Ascending aorta (tissue), 2 donors: ENCODE measurements at regions of chr1 and their contacts with region 1.

Region 1: DNA sequence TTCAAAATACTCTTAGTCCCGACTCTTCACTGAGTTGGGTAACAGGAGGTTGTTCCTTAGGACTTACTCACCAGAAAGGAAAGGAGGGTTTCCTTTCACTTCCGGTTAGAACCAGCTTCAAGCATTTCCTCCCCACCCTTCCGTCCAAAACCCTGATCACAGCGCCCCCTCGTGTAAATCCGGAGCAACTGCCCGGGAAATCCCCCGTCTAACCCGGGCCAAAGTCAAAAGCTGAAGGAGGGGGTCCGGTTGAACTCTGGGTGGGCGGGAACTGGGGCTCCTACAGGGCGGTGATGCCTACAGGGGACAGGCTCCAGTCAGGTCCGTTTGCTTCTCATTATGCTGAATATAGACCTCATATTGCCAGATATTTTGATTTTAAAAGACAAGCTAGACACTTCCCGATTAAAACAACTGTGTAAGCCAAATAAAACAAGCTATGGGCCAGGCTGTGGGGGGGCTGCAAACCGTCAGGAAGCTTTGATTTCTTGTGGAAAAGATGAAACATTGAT is 15.0 kb upstream of the MTARC2 start:
- DNase-seq: peak in 1 of 2 donors; percentile 88
- H3K4me3 ChIP-seq: peak overlapping the region; percentile 24 to 56
- H3K27ac ChIP-seq: peak overlapping the region; percentile 80 to 82
- H3K4me1 ChIP-seq: peaks cover 0 to 11% of the 10 kb centered on the region in 2 donors
- H3K27me3 ChIP-seq: no peaks in the 10 kb centered on the region
- CTCF ChIP-seq: peak; percentile 79 to 92 (median 90)

Region 2: GRCh38 chr1:220272047-220272840 is 460.9 kb before region 1 on chr1 and contains the start of gene RAB3GAP2:
- intact Hi-C with region 1: loop called (anchors 5 kb)
- DNase-seq: peak; percentile 80 to 97
- H3K4me3 ChIP-seq: peak within 1 kb of the TSS; percentile 79 to 89
- H3K27ac ChIP-seq: peak within 1 kb of the TSS; percentile 76 to 85
- H3K4me1 ChIP-seq: peaks cover 0 to 13% of the 10 kb centered on the region in 2 donors
- H3K27me3 ChIP-seq: no peaks in the 10 kb centered on the region
- CTCF ChIP-seq: no peak
- total RNA-seq, gene RAB3GAP2: 9.8 TPM

Region 3: DNA sequence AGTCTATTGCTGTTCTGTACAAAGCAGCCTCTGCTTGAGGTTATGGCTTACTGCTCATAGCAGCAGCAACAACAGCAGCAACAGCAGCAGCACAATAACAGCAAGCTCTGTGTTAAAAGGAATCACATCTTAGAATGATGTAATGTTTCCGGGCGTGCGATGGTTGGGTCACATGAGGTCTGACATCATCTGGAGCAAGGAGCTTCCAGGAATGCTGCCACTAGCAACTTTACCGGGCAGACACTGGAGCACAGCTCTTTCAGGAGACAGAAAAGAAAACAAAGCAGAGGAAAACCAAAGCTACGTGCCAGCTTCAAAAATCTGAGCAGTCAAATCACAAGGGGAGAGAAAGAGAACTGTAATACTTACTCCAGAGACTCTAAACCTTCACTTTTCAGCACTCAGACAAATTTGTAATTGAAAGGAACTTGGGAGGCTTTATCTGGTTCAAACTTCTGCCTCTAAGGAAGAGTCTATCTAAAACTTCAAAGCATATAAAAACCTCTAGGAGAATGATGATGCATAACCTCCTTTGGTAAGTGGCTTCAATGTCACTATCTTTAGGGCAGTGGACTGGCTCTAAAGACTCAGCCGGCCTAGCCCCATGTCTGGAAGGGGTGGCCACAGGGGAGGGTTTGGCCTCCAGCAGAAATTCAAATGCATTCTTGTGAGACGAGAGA is 432.6 kb before region 1 on chr1:
- intact Hi-C with region 1: loop called (anchors 2 kb)
- DNase-seq: peak; percentile 54 to 90
- H3K4me3 ChIP-seq: peak overlapping the region in 1 of 2 donors; percentile 42
- H3K27ac ChIP-seq: peak overlapping the region; percentile 79 to 81
- H3K4me1 ChIP-seq: peaks cover 0 to 2% of the 10 kb centered on the region in 2 donors
- H3K27me3 ChIP-seq: no peaks in the 10 kb centered on the region
- CTCF ChIP-seq: no peak

Region 4: GRCh38 chr1:220527908-220528678 is 205.1 kb before region 1 on chr1 and contains the start of gene MARK1:
- intact Hi-C with region 1: loop called (anchors 5 kb)
- DNase-seq: peak in 1 of 2 donors; percentile 80
- H3K4me3 ChIP-seq: peak within 1 kb of the TSS; percentile 85 to 86
- H3K27ac ChIP-seq: peak within 1 kb of the TSS; percentile 85 to 89
- H3K4me1 ChIP-seq: no peaks in the 10 kb centered on the region
- H3K27me3 ChIP-seq: no peaks in the 10 kb centered on the region
- CTCF ChIP-seq: no peak
- total RNA-seq, gene MARK1: 11.6 TPM

Region 5: DNA sequence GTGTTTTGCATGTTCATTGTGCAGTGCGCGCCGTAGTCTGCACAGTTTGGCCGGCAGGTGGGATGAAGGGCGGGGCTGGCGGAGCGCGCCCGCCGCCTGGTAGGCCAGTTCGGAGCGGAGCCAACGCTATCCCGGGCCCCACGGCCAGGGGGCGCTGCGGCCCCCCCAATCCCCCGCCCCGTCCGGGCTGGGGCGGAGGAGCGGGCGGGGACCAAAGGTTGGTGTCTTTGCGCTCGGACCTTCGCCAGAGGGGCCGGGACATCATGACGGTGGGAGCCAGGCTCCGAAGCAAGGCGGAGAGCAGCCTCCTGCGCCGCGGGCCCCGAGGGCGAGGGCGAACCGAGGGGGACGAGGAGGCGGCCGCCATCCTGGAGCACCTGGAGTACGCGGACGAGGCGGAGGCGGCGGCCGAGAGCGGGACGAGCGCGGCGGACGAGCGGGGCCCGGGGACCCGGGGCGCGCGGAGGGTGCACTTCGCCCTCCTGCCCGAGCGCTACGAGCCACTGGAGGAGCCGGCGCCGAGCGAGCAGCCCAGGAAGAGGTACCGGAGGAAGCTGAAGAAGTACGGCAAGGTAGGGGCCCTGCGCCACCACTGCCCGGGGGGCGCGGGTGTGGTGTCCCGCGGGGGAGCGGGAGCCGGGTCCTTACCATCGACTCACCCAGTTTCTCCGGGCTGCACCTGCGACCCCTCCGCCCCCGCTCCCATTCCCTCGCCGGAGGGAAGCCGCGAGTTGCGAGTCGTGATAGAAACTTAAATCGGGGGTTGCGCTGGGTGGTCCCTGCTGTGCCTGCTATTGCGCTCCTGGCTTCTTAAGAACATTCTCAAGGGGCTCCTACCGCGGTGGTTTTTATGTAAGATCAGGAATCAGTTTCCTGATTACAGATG is 42.8 kb before region 1 on chr1 and contains the start of gene C1orf115:
- intact Hi-C with region 1: loop called (anchors 1 kb)
- DNase-seq: peak; percentile 37 to 86
- H3K4me3 ChIP-seq: peak within 1 kb of the TSS; percentile 75 to 77
- H3K27ac ChIP-seq: no peak within 1 kb of the TSS
- H3K4me1 ChIP-seq: no peaks in the 10 kb centered on the region
- H3K27me3 ChIP-seq: no peaks in the 10 kb centered on the region
- CTCF ChIP-seq: peak; percentile 89 to 99 (median 96)
- total RNA-seq, gene C1orf115: 18.4 TPM

Region 6: GRCh38 chr1:220748089-220748934 is 15.2 kb after region 1 on chr1 and contains the start of gene MTARC2:
- intact Hi-C with region 1: loop called (anchors 2 kb)
- DNase-seq: peak; percentile 44 to 91
- H3K4me3 ChIP-seq: peak within 1 kb of the TSS; percentile 94 to 95
- H3K27ac ChIP-seq: peak within 1 kb of the TSS; percentile 87 to 89
- H3K4me1 ChIP-seq: peaks cover 0 to 28% of the 10 kb centered on the region in 2 donors
- H3K27me3 ChIP-seq: no peaks in the 10 kb centered on the region
- CTCF ChIP-seq: no peak
- total RNA-seq, gene MTARC2: 23.7 TPM

Region 7: DNA sequence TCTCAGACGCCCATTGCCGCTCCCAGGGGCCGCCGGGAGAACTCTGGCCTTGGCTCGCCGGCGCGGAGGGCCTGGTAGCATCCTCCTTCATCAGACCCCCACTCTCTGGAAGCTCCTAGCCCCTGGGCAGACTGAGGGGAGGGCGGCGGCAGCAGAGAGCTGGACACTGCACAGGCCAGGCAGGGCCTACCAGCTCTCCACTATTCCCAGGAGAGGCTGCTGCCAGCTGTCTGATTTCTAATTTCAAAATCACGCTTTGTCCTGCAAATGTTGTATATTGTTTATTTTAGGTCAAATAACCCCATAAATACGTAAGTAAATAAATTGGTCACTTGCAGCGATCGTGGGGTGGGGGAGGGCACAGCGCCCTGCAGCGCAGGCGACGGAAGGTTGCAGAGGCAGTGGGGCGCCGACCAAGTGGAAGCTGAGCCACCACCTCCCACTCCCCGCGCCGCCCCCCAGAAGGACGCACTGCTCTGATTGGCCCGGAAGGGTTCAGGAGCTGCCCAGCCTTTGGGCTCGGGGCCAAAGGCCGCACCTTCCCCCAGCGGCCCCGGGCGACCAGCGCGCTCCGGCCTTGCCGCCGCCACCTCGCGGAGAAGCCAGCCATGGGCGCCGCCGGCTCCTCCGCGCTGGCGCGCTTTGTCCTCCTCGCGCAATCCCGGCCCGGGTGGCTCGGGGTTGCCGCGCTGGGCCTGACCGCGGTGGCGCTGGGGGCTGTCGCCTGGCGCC is 53.4 kb after region 1 on chr1 and contains the start of gene MTARC1:
- intact Hi-C with region 1: loop called (anchors 5 kb)
- DNase-seq: peak in 1 of 2 donors; percentile 81
- H3K4me3 ChIP-seq: peak within 1 kb of the TSS; percentile 78
- H3K27ac ChIP-seq: peak within 1 kb of the TSS; percentile 73 to 77
- H3K4me1 ChIP-seq: peaks cover 7 to 18% of the 10 kb centered on the region in 2 donors
- H3K27me3 ChIP-seq: no peaks in the 10 kb centered on the region
- CTCF ChIP-seq: peak in 1 of 3 experiments; percentile 5
- total RNA-seq, gene MTARC1: 2.2 TPM

Region 8: DNA sequence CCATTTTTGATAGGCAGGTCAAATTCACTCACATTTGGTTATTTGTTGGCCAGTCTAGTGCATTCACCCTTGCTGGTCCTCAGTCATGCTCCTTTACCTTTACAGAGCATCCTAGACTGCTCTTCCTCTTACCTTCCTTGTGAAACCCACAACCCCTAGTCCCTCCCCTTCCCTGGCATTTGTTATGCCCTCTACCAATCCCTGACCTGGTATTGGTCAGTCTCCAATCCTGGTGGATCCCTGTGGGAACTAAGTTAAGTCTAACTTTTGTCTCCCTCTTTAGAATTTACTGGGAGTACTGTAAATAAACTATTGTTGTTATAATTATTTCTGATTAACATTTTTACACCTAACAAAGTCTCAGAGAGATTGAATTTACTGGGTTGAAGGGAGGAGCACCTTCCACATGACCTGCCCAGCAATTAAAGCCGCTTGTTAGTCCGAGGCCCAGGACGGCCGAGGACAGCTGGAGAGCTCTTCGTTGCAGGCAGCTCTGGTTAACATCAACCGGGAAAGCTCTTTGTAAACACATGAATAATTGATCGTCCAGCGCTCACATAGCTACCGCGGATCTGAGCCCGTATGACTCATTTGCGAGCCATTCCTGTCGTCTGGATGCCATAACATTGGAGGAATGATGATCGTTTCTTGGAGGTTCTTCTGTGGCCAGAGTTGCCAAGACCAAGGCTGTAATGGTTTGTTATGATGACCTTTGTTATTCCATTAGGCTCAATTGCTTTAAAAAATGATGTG is 85.5 kb after region 1 on chr1:
- intact Hi-C with region 1: no loop called
- DNase-seq: no peak
- H3K4me3 ChIP-seq: no peak overlapping the region
- H3K27ac ChIP-seq: peak overlapping the region in 1 of 2 donors; percentile 17
- H3K4me1 ChIP-seq: peaks cover 3 to 4% of the 10 kb centered on the region in 2 donors
- H3K27me3 ChIP-seq: no peaks in the 10 kb centered on the region
- CTCF ChIP-seq: no peak